ENCODE measurements at regions of chr4 and their contacts with region 1.

Region 1: DNA sequence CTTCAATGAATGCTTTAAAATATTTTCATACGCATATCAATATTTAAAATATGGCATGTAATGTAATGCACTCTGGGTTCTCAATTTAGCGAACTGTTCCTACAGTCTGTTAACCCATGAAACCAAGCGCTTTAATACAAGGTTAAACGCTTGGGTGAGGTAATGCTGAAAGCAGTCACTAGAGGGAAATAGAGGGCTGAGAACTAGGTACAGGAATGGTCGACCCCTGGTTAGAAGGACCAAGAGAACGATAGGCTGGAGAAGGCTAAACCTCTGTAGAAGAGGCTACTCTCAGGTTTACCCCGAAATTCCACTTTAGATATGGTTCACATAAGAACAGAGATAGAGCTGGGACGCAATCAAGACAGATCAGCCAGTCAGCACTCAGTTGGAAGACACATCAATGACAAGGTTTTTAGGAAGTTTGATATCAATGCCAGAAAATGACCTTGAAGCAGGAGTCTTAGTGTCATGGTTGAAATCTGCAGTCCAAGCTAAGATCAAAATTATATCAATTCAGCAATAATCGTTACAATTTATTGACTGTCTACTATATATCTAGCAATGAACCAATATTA is 26.9 kb downstream of the ARSJ start:
- DNase-seq: peak in 4 of 5 donors; percentile 5 to 30 (median 15)
- H3K4me3 ChIP-seq: no peak overlapping the region
- H3K4me3 Mint-ChIP-seq: peak overlapping the region in 1 of 8 donors; percentile 10
- H3K27ac ChIP-seq: no peak overlapping the region
- H3K27ac Mint-ChIP-seq: no peak overlapping the region
- H3K4me1 ChIP-seq: peaks cover 5% of the 10 kb centered on the region
- H3K4me1 Mint-ChIP-seq: peaks cover 0 to 6% (median 5%) of the 10 kb centered on the region in 4 donors
- H3K27me3 ChIP-seq: no peaks in the 10 kb centered on the region
- H3K27me3 Mint-ChIP-seq: peaks cover 2 to 7% of the 10 kb centered on the region in 2 donors

Region 2: DNA sequence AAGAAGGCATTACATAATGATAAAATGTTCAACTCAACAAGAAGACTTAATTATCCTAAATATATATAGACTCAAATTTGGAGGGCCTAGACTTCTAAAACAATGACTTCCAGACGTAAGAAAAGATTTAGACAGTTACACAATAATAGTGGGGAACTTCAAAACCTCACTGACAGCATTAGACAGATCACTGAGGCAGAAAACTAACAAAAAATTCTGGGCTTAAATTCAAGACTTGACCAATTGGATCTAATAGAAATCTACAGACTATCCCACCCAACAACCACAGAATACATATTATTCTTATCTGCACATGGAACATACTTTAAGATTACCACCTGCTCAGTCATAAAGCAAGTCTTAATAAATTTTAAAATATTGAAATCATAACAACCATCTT is 120.2 kb after region 1 on chr4:
- CTCF ChIA-PET with region 1: interaction called, 9 read pairs
- POLR2A ChIA-PET with region 1: no interaction called
- intact Hi-C with region 1: loop called (anchors 1 kb)
- DNase-seq: no peak
- H3K4me3 ChIP-seq: no peak overlapping the region
- H3K4me3 Mint-ChIP-seq: no peak overlapping the region
- H3K27ac ChIP-seq: no peak overlapping the region
- H3K27ac Mint-ChIP-seq: no peak overlapping the region
- H3K4me1 ChIP-seq: no peaks in the 10 kb centered on the region
- H3K4me1 Mint-ChIP-seq: peaks cover 0 to 5% (median 3%) of the 10 kb centered on the region in 4 donors
- H3K27me3 ChIP-seq: no peaks in the 10 kb centered on the region
- H3K27me3 Mint-ChIP-seq: peaks cover 0 to 1% of the 10 kb centered on the region in 2 donors

Measured in CD4-positive, alpha-beta memory T cell (primary cell).